Activated CD8-positive, alpha-beta T cell treated with anti-CD3 and anti-CD28 coated beads, Interleukin-2, amount 10 ng/mL, durations not matched to agents 7 days and 5 days (primary cell): ENCODE measurements at regions of chr20 and their contacts with region 1.

Region 1: DNA sequence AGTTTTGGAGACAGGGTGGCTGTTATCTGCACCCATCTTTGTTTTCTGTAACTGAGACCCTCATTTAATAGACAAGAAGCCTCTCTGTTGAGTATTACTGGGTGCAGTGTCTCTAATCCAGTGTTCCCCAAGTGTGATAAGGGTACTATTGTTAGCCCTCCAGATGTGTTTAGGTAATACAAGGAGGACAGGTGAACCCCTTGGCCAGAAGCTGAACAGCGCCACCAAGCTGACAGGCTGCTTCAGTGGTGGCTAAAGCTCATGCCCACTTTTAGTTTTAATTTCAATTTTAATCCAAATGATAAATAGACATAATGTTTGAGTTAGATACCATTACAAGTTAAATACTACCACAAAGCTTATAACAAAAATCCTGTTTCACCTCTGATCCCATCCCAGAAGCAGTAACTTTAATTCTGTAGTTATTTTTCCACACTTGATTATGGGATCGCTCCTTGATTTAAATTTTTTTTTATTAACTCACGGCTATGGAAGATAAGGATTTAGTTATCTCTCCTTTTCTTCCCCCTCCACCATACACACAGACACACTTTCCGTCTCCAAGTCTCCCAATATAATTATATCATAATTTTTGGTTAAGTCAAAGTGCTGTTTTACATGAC is 8.4 kb upstream of the STK35 start:
- DNase-seq: peak; percentile 55
- ATAC-seq: no peak
- H3K4me3 Mint-ChIP-seq: no peak overlapping the region
- H3K27ac Mint-ChIP-seq: no peak overlapping the region
- H3K4me1 Mint-ChIP-seq: no peaks in the 10 kb centered on the region
- H3K27me3 Mint-ChIP-seq: peaks cover 20% of the 10 kb centered on the region

Region 2: DNA sequence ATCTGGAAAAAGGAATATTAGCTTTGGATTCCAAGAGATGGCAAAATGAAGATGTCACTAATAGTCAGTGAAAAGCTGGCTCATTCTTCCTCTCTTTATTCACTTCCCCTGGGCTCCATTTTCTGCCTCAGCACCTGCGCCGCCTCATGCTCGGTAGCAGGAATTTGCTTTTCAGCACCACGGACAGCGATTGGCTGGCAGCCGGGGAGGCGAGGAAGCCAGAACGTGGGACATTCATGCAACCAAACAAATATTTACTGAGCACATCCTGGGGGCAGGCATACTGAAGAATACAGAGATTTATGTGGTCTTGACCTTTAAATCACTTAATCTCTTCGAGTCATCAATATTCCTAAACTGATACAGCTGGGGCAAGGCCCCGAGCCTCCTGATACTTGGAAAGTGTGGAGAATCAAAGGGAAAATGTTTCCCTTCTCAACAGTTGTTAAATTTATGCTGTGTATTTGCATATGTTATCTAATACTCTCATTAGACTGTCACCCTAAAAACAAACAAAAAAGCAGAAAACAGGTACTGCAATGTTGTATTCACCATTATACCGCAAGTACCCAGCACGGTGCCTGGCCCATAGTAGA is 87.3 kb before region 1 on chr20:
- CTCF ChIA-PET with region 1: interaction called, 27 read pairs
- POLR2A ChIA-PET with region 1: no interaction called
- DNase-seq: peak; percentile 80
- ATAC-seq: no peak
- H3K4me3 Mint-ChIP-seq: no peak overlapping the region
- H3K27ac Mint-ChIP-seq: no peak overlapping the region
- H3K4me1 Mint-ChIP-seq: no peaks in the 10 kb centered on the region
- H3K27me3 Mint-ChIP-seq: peaks cover 4% of the 10 kb centered on the region